Caco-2 (cell line): ENCODE measurements at regions of chr3 and their contacts with region 1.

Region 1: DNA sequence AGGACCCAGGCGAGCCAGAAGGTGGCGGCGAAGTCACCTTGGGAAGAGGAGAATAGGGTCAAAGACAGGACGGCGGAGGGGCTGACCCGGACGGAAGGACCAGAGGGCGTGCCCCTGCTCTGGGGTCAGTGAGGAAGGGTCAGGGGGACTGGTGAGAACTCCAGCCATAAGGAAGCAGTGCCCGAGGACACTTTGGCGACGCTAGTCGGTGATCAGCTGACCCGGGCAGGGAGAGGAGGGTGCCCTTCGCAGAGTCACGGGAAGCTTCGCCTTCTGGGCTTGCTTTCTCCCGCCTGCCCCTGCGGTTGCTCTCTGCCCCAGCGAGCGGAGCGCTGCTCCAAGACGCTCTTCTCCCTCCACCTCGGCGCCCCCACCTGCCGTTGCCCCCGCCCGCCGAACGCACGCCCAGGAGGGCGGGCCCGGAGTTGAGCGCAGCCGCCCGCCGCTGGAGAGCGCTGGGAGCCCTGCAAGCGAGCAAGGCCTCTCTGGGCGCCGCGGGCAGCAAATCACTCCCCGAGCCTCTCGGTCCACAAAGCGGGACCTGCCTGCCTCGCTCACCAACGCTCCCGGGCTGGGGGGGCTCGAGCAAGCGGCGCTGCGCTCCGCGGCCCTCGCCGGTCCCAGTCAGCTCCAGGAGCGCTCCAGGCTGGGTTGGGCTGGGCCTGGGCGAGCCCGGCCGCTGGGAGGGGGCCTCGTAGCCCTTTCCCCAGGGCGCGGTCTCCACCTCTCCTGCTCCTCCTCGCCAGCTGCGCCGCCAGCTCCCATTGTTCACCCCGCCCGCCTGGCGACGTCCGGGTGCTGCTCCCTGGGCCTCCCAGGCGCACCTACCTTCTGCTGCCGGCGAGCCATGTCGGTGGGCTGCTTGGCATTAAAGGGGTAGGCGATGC is 1.2 kb downstream of the CADPS start:
- DNase-seq: peak; percentile 60 to 61
- H3K4me3 ChIP-seq: peak overlapping the region; percentile 15
- H3K4me3 Mint-ChIP-seq: peak overlapping the region; percentile 93
- H3K27ac Mint-ChIP-seq: peak overlapping the region; percentile 59
- H3K4me1 ChIP-seq: no peaks in the 10 kb centered on the region; the same call in 1 of the 2 replicates
- H3K4me1 Mint-ChIP-seq: no peaks in the 10 kb centered on the region
- H3K27me3 ChIP-seq: peaks cover 2% of the 10 kb centered on the region; the same call in 1 of the 2 replicates
- H3K27me3 Mint-ChIP-seq: peaks cover 19% of the 10 kb centered on the region
- CTCF ChIP-seq: peak in 1 of 2 experiments; percentile 44

Region 2: DNA sequence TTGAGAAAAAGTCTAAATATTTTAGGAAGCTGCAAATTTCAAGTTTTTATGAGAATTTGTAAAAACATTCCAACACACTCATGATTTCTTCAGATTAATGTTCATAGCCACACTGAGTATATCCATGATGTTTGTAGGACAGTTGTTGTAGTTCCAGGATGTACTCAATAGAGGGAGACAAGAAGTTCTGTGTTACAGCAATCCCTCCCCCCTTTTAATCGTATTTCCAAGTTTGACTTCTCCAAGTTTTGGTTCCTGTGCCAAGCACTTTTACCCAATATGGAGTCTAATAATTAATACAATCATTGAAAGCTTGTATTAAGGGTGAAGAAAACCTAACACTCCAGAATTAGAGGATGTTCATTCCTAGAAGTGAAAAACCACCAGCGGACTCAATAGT is 644.1 kb before region 1 on chr3:
- CTCF ChIA-PET with region 1: no interaction called
- POLR2A ChIA-PET with region 1: no interaction called
- intact Hi-C with region 1: no loop called
- DNase-seq: no peak
- H3K4me3 ChIP-seq: no peak overlapping the region
- H3K4me3 Mint-ChIP-seq: no peak overlapping the region
- H3K27ac Mint-ChIP-seq: no peak overlapping the region
- H3K4me1 ChIP-seq: no peaks in the 10 kb centered on the region
- H3K4me1 Mint-ChIP-seq: no peaks in the 10 kb centered on the region
- H3K27me3 ChIP-seq: no peaks in the 10 kb centered on the region
- H3K27me3 Mint-ChIP-seq: no peaks in the 10 kb centered on the region
- CTCF ChIP-seq: peak; percentile 26 to 44

Region 3: DNA sequence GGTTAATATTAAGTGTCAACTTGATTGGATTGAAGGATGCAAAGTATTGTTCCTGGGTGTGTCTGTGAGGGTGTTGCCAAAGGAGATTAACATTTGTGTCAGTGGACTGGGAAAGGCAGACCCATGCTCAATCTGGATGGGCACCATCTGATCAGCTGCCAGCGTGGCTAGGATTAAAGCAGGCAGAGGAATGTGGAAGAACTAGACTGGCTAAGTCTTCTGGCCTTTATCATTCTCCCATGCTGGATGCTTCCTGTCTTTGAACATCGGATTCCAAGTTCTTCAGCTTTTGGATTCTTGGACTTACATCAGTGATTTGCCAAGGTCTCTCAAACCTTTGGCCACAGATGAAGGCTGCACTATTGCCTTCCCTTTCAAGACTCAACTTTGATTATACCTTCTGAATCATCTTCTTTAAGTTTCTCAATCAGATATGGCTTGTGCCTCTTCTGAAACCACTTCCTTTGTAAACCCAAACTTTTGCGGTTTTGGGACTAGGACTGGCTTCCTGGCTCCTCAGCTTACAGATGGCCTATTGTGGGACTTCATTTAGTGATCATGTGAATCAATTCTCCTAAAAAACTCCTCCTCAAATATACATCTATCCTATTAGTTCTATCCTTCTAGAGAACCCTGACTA is 48.2 kb after region 1 on chr3:
- CTCF ChIA-PET with region 1: no interaction called
- POLR2A ChIA-PET with region 1: no interaction called
- intact Hi-C with region 1: no loop called
- DNase-seq: no peak
- H3K4me3 ChIP-seq: no peak overlapping the region
- H3K4me3 Mint-ChIP-seq: no peak overlapping the region
- H3K27ac Mint-ChIP-seq: no peak overlapping the region
- H3K4me1 ChIP-seq: no peaks in the 10 kb centered on the region; the same call in 1 of the 2 replicates
- H3K4me1 Mint-ChIP-seq: peaks cover 6% of the 10 kb centered on the region
- H3K27me3 ChIP-seq: no peaks in the 10 kb centered on the region
- H3K27me3 Mint-ChIP-seq: no peaks in the 10 kb centered on the region
- CTCF ChIP-seq: no peak

Region 4: DNA sequence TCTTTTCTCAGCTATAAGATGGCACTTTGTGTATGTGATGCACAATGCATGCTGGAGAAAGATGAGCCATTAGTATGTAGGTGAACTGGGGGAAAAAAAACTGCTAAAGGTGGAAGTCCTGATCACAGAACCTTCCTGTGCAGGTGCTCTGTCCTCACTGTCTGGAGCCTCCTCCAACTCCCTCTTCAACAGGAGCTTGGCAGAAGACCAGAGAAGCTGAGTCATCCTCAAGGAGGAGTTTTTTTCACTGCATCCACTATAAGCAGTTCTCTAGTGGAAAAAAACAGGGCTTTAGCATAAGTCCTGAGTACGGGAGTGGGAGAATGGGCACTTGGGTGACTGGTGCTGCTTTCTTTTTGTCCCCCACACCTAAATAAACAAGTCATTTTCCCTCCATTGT is 169.6 kb after region 1 on chr3:
- CTCF ChIA-PET with region 1: no interaction called
- POLR2A ChIA-PET with region 1: no interaction called
- intact Hi-C with region 1: loop called (anchors 10 kb)
- DNase-seq: no peak
- H3K4me3 ChIP-seq: no peak overlapping the region
- H3K4me3 Mint-ChIP-seq: no peak overlapping the region
- H3K27ac Mint-ChIP-seq: no peak overlapping the region
- H3K4me1 ChIP-seq: no peaks in the 10 kb centered on the region
- H3K4me1 Mint-ChIP-seq: no peaks in the 10 kb centered on the region
- H3K27me3 ChIP-seq: no peaks in the 10 kb centered on the region
- H3K27me3 Mint-ChIP-seq: peaks cover 6% of the 10 kb centered on the region
- CTCF ChIP-seq: no peak

Region 5: DNA sequence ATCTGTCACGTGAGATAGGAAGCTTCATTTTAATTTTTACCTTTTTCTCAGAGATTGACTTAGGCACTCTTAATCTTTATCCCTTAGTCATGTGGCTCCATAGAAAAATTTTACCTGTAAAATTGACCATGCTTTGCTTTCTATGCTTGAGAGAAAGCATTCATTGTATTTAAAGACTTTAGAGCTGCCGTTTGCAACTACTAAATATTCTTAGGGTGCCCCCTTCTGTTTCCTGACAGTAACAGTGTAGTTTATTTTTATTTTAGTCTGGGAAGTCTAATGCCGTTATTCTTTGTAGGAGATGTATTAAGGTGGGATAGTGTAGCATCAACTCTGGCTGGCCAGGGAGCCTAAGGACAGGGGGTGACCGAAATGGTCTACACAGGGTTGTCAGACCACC is 319.6 kb after region 1 on chr3:
- CTCF ChIA-PET with region 1: interaction called, 9 read pairs
- POLR2A ChIA-PET with region 1: no interaction called
- intact Hi-C with region 1: loop called (anchors 1 kb)
- DNase-seq: peak in 1 of 2 experiments; percentile 24
- H3K4me3 ChIP-seq: no peak overlapping the region
- H3K4me3 Mint-ChIP-seq: no peak overlapping the region
- H3K27ac Mint-ChIP-seq: no peak overlapping the region
- H3K4me1 ChIP-seq: no peaks in the 10 kb centered on the region
- H3K4me1 Mint-ChIP-seq: no peaks in the 10 kb centered on the region
- H3K27me3 ChIP-seq: no peaks in the 10 kb centered on the region
- H3K27me3 Mint-ChIP-seq: peaks cover 10% of the 10 kb centered on the region
- CTCF ChIP-seq: peak; percentile 41 to 53

Region 6: DNA sequence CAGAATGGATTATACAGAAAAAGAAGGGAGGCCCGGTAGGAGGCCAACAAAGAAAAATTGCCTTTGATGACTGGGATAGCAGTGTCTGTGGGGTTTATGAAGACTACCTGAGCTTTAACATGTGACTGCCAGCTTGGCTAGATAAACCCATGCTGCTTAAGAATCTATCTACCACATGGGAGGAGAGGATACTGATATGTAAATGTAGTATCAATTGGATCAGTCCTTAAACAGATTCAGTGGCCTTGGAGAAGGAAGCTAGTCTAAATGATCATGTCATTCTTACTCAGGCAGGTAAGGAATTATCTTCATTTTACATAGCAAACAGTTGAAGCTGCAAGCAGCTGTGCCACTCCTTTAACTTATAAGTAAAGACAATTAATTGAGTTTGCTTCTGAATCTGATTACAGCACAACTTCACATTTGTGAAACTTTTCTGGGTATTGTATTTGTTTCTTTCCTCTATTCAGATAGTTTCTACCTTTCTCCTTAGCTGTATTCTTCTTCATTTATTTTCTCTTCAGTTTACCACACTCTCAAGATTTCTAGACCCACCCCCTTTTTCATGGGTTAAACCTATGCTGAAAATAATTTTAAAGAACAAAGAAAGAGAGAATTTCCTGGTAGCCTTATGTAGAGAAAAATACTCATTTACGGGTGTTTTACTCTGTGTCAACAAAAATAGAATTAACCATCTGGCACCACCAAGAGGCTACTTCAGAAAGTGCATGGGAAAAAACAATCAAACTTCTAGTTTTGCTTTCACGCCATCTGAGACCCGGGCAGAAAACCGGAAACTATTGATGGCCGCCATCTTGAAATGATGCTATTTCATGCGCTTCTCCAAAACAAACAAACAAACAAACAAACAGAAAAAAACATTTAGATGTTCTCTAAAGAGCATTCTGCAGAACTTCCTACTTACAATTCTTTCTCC is 354.4 kb after region 1 on chr3:
- CTCF ChIA-PET with region 1: interaction called, 5 read pairs
- POLR2A ChIA-PET with region 1: no interaction called
- intact Hi-C with region 1: loop called (anchors 5 kb)
- DNase-seq: peak; percentile 37 to 41
- H3K4me3 ChIP-seq: no peak overlapping the region
- H3K4me3 Mint-ChIP-seq: no peak overlapping the region
- H3K27ac Mint-ChIP-seq: no peak overlapping the region
- H3K4me1 ChIP-seq: no peaks in the 10 kb centered on the region
- H3K4me1 Mint-ChIP-seq: no peaks in the 10 kb centered on the region
- H3K27me3 ChIP-seq: no peaks in the 10 kb centered on the region
- H3K27me3 Mint-ChIP-seq: peaks cover 5% of the 10 kb centered on the region
- CTCF ChIP-seq: peak; percentile 47 to 54